ENCODE measurements at regions of chrX and their contacts with region 1.

Region 1: DNA sequence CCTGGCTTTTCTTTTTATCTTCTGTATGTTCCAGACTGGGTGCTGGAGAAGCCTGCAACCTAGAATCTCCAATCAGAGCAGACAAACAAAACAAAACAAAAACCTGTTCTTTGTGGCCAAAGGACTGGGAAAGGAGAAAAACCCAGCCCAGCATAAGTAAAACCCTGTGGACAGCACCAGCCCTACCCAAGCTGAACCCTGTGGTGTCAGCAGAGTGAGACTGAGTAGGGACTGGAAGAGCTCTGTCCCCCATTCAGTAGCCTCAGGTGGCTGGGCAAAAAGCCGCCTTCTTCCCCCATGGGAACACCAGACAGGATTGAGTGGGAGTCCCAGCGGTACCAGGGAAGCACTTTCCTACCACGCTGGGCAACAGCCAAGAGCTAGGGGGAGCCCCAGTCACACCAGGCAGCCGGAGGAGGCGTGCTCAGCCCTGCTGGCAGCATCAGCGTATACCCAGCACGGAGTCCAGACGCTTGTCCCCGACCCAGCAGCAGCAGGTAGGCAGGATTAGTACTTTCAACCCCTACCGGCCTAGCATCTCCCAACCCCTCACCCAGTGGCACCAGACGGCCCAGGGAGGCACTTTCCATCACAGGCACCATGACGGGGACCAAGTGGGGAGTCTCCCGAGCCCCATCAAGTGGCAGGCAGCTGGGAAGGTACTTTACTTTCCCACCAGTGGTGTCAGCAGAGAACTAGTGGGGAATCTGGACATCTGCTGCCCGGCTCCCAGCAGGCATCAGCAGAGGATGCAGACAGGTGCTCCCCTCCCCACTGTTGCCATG is 8.6 kb upstream of the JADE3 start:
- DNase-seq: peak; percentile 11
- H3K4me3 ChIP-seq: peak overlapping the region; percentile 73
- H3K27ac ChIP-seq: no peak overlapping the region
- H3K27me3 ChIP-seq: no peaks in the 10 kb centered on the region
- CTCF ChIP-seq: peak; percentile 59

Region 2: GRCh38 chrX:46649421-46650260 is 254.0 kb before region 1 on chrX:
- CTCF ChIA-PET with region 1: no interaction called
- POLR2A ChIA-PET with region 1: no interaction called
- DNase-seq: no peak
- H3K4me3 ChIP-seq: no peak overlapping the region
- H3K27ac ChIP-seq: no peak overlapping the region
- H3K27me3 ChIP-seq: no peaks in the 10 kb centered on the region
- CTCF ChIP-seq: no peak

Region 3: DNA sequence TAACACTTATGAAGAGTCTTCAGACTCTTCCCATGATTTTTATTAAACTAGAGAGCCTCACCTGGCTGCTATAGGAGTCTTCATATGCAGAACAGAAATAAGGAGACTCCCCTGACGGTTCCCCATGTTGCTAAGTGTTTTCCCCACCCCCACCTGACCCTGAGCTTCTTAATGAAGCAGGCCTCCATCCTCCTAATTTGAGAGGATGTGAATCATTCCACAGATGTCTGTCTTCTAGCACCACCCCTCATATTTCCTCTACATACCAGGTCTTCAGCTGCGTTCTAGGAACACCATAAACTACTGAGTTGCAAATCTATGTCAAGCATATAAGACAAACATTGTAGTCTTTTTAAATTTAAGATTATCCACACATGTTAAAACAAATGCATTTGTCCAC is 29.9 kb before region 1 on chrX:
- CTCF ChIA-PET with region 1: interaction called, 21 read pairs
- POLR2A ChIA-PET with region 1: no interaction called
- DNase-seq: no peak
- H3K4me3 ChIP-seq: no peak overlapping the region
- H3K27ac ChIP-seq: no peak overlapping the region
- H3K27me3 ChIP-seq: no peaks in the 10 kb centered on the region
- CTCF ChIP-seq: no peak

Region 4: GRCh38 chrX:46884799-46885198 is 18.9 kb before region 1 on chrX:
- CTCF ChIA-PET with region 1: interaction called, 21 read pairs
- POLR2A ChIA-PET with region 1: no interaction called
- DNase-seq: no peak
- H3K4me3 ChIP-seq: no peak overlapping the region
- H3K27ac ChIP-seq: no peak overlapping the region
- H3K27me3 ChIP-seq: no peaks in the 10 kb centered on the region
- CTCF ChIP-seq: no peak

Region 5: GRCh38 chrX:46929439-46930261 is 26.0 kb after region 1 on chrX:
- CTCF ChIA-PET with region 1: interaction called, 11 read pairs
- POLR2A ChIA-PET with region 1: no interaction called
- DNase-seq: no peak
- H3K4me3 ChIP-seq: no peak overlapping the region
- H3K27ac ChIP-seq: peak overlapping the region; percentile 0
- H3K27me3 ChIP-seq: no peaks in the 10 kb centered on the region
- CTCF ChIP-seq: no peak

Region 6: DNA sequence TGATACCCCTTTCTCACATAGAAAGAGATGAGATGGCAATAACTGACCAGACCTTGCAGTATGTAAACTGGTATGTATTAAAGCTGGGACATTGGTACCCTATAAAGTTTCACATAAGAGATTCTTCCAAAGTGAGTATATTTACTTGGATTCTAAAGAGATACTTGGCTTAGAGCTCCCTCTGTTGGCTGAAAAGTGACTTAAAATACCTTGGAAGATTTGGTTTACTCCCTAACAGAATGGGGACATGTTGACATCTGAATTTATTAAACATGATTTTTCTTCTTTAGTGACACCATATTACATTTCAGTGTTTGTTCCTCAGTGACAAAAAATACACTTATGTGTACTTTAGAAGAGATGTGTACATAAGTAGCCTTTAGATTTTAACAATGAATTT is 126.7 kb after region 1 on chrX:
- CTCF ChIA-PET with region 1: interaction called, 30 read pairs
- POLR2A ChIA-PET with region 1: no interaction called
- DNase-seq: peak; percentile 26
- H3K4me3 ChIP-seq: no peak overlapping the region
- H3K27ac ChIP-seq: no peak overlapping the region
- H3K27me3 ChIP-seq: no peaks in the 10 kb centered on the region
- CTCF ChIP-seq: peak; percentile 58

Region 7: GRCh38 chrX:47093248-47093647 is 189.6 kb after region 1 on chrX:
- CTCF ChIA-PET with region 1: interaction called, 13 read pairs
- POLR2A ChIA-PET with region 1: no interaction called
- DNase-seq: peak; percentile 0
- H3K4me3 ChIP-seq: no peak overlapping the region
- H3K27ac ChIP-seq: no peak overlapping the region
- H3K27me3 ChIP-seq: no peaks in the 10 kb centered on the region
- CTCF ChIP-seq: peak; percentile 41

Region 8: DNA sequence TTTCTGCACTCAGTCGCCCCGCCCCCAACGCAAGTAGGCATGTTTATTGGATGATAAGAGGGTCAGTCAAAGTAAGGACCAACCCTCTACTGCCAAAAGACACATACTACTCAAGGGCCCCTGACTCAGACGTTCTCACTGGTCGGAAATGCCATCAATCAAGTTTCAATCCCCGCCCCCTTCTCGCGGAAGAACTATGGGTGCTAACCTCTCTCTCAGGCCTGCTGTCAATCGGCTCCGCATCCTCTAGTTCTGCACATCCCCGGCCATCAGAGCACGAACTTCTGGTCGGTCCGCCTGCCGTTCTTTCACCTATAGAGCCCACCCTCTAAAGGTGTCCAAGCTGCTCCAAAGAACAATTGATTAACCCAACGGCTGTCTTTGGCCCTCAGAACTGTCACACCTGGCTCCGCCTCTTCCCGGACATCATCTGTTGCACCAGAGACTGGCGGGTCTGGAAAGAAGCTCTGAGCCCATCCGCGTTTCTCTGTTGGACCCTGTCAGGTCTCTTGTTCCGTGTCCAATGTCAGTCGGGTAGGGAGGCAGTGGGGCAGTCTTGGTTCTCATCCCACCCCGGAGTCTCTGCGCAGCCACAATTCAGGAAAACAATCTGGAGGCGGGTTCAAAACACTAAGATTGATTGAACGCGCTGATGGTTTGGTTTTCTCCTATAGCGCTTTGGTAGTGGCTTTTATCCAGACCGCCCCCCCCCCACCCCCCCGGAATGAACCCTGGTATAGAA is 225.7 kb after region 1 on chrX:
- CTCF ChIA-PET with region 1: no interaction called
- POLR2A ChIA-PET with region 1: no interaction called
- DNase-seq: peak; percentile 87
- H3K4me3 ChIP-seq: peak overlapping the region; percentile 72
- H3K27ac ChIP-seq: peak overlapping the region; percentile 11
- H3K27me3 ChIP-seq: no peaks in the 10 kb centered on the region
- CTCF ChIP-seq: no peak